ENCODE measurements at regions of chr11 and their contacts with region 1.

Region 1: DNA sequence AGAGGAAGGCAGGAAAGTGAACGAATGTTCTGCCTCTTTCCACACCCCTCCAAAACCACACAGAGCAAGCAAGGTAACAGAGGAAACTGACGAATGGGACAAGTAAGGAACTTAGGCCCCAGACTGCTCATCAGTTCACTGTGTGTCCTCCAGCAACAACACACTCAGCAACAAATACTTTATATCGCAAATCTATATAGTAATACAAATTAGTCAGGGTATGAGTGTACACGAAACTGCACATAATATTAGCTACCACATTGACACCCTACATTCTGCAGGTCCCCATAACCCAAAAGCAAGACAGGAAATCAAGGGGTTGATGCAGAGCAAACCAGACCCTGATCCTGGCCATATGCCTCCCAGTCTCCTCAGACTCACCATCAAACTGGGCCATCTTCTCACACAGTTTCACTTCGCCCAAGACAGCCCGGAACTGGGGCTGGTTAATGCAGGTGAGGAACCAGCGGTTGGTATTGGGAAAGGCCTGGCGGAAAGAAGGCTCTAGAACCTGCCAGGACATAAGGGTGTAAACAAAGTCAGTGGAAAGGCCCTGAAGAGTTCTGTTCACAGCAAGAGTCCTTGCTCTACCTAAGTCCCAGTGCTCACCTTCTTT is 6.6 kb downstream of the EEF1G start:
- DNase-seq: no peak
- H3K4me3 Mint-ChIP-seq: no peak overlapping the region
- H3K27ac Mint-ChIP-seq: no peak overlapping the region
- H3K4me1 Mint-ChIP-seq: peaks cover 48% of the 10 kb centered on the region
- H3K27me3 Mint-ChIP-seq: no peaks in the 10 kb centered on the region

Region 2: DNA sequence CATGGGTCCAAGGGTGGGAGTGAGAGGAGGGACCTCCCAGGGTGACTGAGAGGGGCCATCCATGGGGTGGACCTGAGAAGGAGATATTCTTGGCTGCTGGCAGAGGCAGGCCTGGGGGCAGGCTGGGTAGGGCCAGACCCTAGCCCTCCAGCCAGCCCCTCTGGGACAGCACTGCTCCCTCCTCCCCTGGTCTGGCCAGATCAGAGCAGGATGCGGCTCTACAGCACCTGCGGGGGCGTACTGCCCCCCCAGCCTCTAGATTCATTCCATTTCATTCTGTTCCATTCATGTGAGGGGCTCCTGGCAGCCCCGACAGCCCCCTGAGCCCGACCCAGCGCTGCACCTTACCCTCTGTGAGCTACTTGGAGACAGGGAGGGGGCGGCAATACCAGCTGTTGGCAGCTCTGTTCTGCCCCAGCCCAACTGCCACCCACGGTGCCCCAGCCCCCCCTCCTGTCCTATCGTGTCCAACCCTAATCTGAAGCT is 849.0 kb before region 1 on chr11:
- CTCF ChIA-PET with region 1: no interaction called
- DNase-seq: no peak
- H3K4me3 Mint-ChIP-seq: no peak overlapping the region
- H3K27ac Mint-ChIP-seq: no peak overlapping the region
- H3K4me1 Mint-ChIP-seq: no peaks in the 10 kb centered on the region
- H3K27me3 Mint-ChIP-seq: peaks cover 24% of the 10 kb centered on the region

Region 3: DNA sequence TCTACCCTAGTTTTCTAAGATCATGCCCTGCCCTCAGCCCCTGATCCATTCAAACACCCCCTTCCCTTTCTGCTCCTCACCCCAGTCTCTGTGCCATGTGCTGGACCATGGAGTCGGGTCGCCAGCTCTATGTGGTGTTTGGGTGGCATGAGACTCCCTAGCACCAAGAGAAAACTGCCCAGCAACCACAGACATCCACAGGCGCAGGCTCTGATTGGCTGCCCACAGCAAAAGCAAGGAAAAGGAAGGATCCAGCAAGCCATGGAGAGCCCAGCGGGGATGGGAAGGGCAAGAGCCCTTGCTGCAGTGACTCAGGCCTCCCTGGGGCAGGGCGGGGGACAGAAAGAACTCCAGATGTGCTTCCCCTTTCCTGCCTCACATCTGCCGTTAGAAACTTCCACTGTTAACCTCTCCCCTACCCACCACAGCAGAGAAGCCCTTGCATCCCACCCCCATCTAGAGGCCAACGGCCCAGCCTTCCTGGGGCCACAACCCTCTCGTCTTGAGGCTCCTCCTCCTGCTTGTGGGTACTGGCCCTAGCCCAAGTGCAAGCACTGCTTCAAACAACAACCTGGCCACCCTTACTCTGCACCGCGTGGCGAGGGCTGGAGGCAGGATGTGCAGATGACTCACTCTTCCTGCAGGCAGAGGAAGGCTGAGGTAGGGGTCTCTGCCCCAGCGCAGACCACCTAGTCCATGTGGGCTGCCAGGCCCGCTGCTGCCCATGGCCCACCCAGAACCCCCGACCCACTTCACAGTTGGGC is 10.8 kb before region 1 on chr11:
- CTCF ChIA-PET with region 1: interaction called, 11 read pairs
- DNase-seq: peak; percentile 93
- H3K4me3 Mint-ChIP-seq: peak overlapping the region; percentile 59
- H3K27ac Mint-ChIP-seq: peak overlapping the region; percentile 97
- H3K4me1 Mint-ChIP-seq: peaks cover 95% of the 10 kb centered on the region
- H3K27me3 Mint-ChIP-seq: no peaks in the 10 kb centered on the region

Region 4: DNA sequence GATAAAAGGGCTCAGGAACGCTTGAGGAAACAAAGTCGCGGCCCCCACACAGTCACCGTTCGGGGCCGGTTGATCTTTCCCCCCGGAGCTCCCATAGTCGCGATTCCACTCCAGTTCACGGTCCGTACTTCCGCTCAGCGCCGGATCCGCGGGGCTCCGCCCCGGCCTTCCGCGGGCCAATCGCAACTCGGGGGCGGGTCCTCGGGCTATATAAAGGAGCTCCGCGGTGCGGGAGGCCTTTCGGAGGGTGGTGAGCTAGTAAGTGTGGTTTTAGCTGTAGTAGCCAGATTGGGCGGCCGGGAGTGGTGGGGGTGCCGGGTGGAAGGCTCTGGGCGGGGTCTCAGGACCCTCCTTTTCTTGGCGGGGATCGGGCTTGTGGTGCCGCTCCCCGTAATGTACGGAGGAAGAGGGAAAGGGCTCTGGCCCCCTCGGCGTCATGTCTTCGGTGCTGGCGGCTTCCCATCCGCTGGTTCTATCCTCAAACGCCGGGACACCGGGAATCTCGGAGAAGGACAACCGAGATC is 98.0 kb after region 1 on chr11 and contains the starts of genes C11orf98 and CSKMT:
- CTCF ChIA-PET with region 1: no interaction called
- DNase-seq: peak; percentile 96
- H3K4me3 Mint-ChIP-seq: peak within 1 kb of the TSS; percentile 96
- H3K27ac Mint-ChIP-seq: peak within 1 kb of the TSS; percentile 90
- H3K4me1 Mint-ChIP-seq: peaks cover 51% of the 10 kb centered on the region
- H3K27me3 Mint-ChIP-seq: peaks cover 7% of the 10 kb centered on the region